ENCODE measurements at regions of chr1 and their contacts with region 1.

Region 1: DNA sequence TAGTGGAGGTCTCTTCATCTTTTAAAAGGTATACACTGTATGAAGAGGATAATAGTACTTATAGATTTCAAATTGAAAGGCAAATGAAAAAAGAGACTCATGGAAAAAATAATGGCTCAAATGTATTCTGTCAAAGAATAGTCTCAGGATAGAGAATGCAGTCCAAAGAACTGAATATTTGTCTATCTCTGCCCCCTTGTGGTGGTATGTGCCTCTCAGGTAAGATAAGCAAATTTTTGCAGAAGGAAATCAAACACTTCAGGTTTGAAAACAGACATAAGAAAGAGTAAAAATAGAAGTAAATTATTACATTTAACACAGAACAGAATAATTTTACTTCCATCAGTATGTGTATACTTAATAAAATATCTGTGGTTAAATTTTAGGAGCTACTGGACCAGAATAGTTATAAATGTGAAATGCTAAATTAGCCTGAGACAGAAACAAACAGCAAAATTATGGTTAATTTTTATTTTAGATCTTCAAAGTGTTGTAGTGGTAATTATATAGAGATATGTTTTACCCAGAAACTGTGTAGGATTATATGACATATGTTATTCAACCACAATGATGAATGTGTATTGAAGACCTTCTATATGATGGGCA is 164.4 kb upstream of the PALMD start:
- DNase-seq: no peak
- H3K4me3 ChIP-seq: no peak overlapping the region
- H3K27ac ChIP-seq: no peak overlapping the region
- H3K27me3 ChIP-seq: no peaks in the 10 kb centered on the region
- CTCF ChIP-seq: peak; percentile 79

Region 2: GRCh38 chr1:98794196-98794886 is 687.2 kb before region 1 on chr1:
- CTCF ChIA-PET with region 1: interaction called, 25 read pairs
- POLR2A ChIA-PET with region 1: no interaction called
- DNase-seq: peak; percentile 48
- H3K4me3 ChIP-seq: no peak overlapping the region
- H3K27ac ChIP-seq: no peak overlapping the region
- H3K27me3 ChIP-seq: peaks cover 6% of the 10 kb centered on the region
- CTCF ChIP-seq: peak; percentile 93

Region 3: GRCh38 chr1:99469550-99469971 is 11.9 kb before region 1 on chr1:
- CTCF ChIA-PET with region 1: interaction called, 29 read pairs
- POLR2A ChIA-PET with region 1: no interaction called
- DNase-seq: no peak
- H3K4me3 ChIP-seq: no peak overlapping the region
- H3K27ac ChIP-seq: no peak overlapping the region
- H3K27me3 ChIP-seq: no peaks in the 10 kb centered on the region
- CTCF ChIP-seq: no peak

Region 4: DNA sequence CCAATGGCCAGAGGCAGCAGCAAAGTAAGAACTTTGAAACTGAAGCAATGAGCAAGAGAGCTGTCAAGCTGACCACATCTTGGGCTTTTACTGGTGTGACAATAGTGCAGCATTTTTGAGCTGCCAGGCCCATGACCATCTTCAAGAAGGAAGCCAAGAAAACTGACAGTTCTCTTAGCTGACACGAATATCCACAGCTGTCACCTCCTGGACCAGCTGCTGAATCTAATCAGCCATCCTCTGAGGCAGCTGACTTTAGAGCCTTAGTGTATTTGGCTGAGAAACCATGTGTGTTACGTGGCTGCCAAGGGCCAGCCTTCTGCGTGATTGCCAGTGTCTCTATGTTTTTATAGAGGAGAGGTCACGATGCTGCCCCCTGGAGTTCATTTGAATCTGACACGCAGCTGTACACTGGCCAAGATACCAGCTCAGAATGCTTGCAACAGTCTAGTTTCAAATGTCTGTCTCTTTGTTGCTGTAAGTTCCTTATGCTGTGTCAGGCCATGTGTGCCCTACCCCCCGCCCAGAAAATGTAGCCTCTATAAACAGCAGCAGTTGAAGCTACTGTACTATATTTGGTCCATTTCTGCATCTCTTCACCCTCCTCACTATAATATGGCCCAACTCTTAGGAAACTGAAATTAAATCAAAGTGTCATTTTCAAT is 204.2 kb after region 1 on chr1:
- CTCF ChIA-PET with region 1: interaction called, 20 read pairs
- POLR2A ChIA-PET with region 1: no interaction called
- DNase-seq: peak; percentile 68
- H3K4me3 ChIP-seq: no peak overlapping the region
- H3K27ac ChIP-seq: peak overlapping the region; percentile 55
- H3K27me3 ChIP-seq: no peaks in the 10 kb centered on the region
- CTCF ChIP-seq: peak; percentile 61

Region 5: GRCh38 chr1:99707535-99708142 is 226.1 kb after region 1 on chr1:
- CTCF ChIA-PET with region 1: interaction called, 56 read pairs
- POLR2A ChIA-PET with region 1: no interaction called
- DNase-seq: peak; percentile 11
- H3K4me3 ChIP-seq: no peak overlapping the region
- H3K27ac ChIP-seq: no peak overlapping the region
- H3K27me3 ChIP-seq: no peaks in the 10 kb centered on the region
- CTCF ChIP-seq: peak; percentile 87

Region 6: GRCh38 chr1:99886841-99887240 is 405.3 kb after region 1 on chr1:
- CTCF ChIA-PET with region 1: no interaction called
- POLR2A ChIA-PET with region 1: no interaction called
- DNase-seq: no peak
- H3K4me3 ChIP-seq: no peak overlapping the region
- H3K27ac ChIP-seq: no peak overlapping the region
- H3K27me3 ChIP-seq: no peaks in the 10 kb centered on the region
- CTCF ChIP-seq: no peak

Measured in AG04450 (cell line).